ENCODE measurements at regions of chr12 and their contacts with region 1.

Region 1: DNA sequence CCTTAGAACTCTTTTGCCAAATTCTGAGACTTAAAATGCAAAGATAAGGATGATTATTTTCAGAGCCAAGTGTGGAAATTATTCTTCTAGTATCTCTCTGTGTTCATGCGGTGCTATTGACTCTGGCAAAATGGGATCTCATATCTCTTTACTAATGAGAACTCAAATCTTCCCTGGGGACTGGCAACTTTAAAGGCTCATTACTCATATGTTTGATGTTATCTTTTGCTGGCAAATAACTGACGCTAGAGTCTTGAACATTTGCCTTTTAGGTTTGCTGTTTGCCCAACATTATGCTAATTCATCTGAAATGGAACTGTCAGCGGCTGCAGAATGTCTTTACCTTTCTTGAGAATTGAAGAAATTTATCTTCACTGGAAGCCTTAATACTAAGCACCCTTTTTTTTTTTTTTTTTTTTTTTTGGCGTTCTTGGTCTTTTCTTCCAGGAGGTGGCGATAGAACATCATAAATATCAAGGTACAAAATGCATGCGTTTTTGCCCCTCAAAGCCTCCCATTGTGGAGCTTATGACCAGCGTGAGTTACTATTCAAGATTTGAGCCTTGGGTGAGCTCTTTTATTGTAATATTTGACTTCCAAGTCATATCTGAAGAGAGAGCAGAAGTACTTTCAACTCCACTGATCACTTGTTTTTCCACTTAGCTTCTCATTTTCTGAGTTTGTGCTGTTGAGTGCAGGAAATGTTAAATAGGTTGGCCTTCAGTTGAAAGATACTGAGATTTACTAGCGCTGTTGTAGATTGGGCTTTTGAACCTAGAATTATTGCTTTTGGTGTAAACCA is 86.6 kb downstream of the CAND1 start:
- DNase-seq: peak; percentile 18
- ATAC-seq: peak; percentile 48; the same call in 1 of the 2 replicates
- H3K4me3 ChIP-seq: no peak overlapping the region
- H3K27ac ChIP-seq: no peak overlapping the region
- H3K4me1 ChIP-seq: no peaks in the 10 kb centered on the region
- H3K27me3 ChIP-seq: no peaks in the 10 kb centered on the region
- CTCF ChIP-seq: peak; percentile 64

Region 2: GRCh38 chr12:67441736-67442346 is 86.1 kb after region 1 on chr12:
- CTCF ChIA-PET with region 1: no interaction called
- POLR2A ChIA-PET with region 1: no interaction called
- in situ Hi-C with region 1: no loop called
- intact Hi-C with region 1: loop called (anchors 5 kb)
- DNase-seq: peak; percentile 24
- ATAC-seq: peak; percentile 98
- H3K4me3 ChIP-seq: no peak overlapping the region
- H3K27ac ChIP-seq: no peak overlapping the region
- H3K4me1 ChIP-seq: no peaks in the 10 kb centered on the region
- H3K27me3 ChIP-seq: no peaks in the 10 kb centered on the region
- CTCF ChIP-seq: peak; percentile 89

Region 3: DNA sequence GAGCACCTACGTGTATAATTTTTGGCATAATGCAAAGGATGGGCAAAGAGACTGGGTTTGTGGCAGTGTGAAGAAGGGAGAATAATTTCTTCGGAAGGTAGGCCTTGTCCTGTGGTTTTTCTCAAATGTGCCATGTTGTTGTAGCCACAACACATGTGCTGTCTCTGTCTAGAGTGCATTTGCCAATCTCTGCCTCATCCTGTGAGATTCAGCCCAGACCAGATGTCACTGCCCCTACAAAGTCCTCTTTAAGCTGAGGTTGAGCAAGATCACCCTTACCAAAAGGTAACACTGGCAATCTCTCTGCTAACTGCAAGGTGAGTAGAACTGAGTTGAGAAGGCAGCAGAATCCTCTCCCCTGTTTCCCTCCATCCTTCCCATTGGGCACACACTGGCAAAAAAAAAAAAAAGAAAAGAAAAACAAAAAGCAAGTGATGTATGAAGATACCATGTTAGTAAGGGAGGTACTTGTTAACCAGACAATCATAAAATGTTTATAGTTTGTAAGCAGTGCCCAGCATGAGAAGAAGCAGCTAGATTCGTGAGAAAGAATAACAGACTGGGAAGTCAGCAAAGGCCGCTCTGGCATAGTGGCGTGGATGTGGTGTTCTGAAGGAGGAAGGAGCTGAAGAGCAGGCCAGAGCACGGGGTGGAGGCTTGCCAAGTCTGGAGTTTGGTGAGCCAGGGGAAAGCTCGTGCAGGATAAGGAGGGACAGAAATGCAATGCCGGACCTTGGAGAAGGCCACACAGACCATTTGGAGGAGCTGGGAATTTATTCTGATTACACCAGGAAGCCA is 311.7 kb after region 1 on chr12:
- CTCF ChIA-PET with region 1: interaction called, 16 read pairs
- POLR2A ChIA-PET with region 1: no interaction called
- in situ Hi-C with region 1: no loop called
- intact Hi-C with region 1: no loop called
- DNase-seq: no peak
- ATAC-seq: no peak
- H3K4me3 ChIP-seq: no peak overlapping the region
- H3K27ac ChIP-seq: no peak overlapping the region
- H3K4me1 ChIP-seq: no peaks in the 10 kb centered on the region
- H3K27me3 ChIP-seq: no peaks in the 10 kb centered on the region
- CTCF ChIP-seq: no peak

Region 4: DNA sequence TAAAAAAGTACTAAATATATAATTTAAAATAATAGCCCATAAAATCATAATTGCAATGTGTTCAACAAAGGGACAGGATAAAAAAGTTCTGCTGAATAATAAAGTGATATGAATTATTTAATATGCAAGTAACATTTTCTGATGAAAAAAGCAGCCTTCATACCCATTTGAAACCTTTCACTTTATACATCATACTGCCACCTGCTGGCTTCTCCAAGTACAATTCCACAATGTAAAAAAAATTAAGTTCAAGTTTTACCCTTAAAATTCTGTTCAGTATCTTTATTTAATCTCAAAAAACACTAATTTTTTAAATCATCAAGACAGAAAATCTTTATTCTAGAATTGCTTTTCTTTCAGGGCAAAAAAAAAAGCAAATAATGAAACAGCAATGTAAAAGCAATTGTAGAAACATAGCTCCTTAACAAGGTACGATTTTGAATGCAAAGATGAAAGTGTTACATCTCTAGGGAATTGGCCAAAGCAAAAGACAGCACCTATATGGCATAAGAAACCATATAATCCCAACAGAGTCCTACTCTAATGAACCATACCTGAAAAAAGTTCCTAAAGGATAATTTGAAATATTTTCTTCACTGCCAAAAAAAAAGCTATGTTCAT is 961.4 kb after region 1 on chr12:
- CTCF ChIA-PET with region 1: interaction called, 13 read pairs
- POLR2A ChIA-PET with region 1: no interaction called
- in situ Hi-C with region 1: no loop called
- intact Hi-C with region 1: no loop called
- DNase-seq: no peak
- ATAC-seq: no peak
- H3K4me3 ChIP-seq: no peak overlapping the region
- H3K27ac ChIP-seq: no peak overlapping the region; the same call in 1 of the 2 replicates
- H3K4me1 ChIP-seq: no peaks in the 10 kb centered on the region; the same call in 1 of the 2 replicates
- H3K27me3 ChIP-seq: no peaks in the 10 kb centered on the region
- CTCF ChIP-seq: peak; percentile 60; the same call in 1 of the 2 replicates